Cardiac septum (tissue), 1 donor: ENCODE measurements at regions of chr3 and their contacts with region 1.

Region 1: GRCh38 chr3:197511130-197511529 is 44.6 kb downstream of the BDH1 start:
- DNase-seq: no peak

Region 2: DNA sequence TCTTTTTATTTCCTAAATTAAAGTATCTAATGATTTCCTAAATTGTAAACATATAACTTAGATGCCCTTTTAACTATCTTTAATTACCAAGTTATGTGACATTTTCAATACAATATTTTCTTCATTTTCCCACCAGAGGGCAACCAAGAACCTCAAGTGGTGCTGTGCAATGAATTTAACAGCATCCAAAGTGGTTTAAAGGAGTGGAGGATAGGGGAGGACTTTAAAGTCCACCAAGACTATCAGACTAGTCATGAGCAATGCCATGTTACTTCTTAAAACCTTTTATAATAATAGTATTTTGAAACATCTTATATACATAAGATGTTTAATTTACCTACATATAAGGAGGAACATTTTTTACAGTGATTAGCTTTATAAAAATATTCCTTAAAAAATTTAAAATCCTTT is 287.1 kb before region 1 on chr3:
- intact Hi-C with region 1: loop called (anchors 5 kb)
- DNase-seq: no peak

Region 3: DNA sequence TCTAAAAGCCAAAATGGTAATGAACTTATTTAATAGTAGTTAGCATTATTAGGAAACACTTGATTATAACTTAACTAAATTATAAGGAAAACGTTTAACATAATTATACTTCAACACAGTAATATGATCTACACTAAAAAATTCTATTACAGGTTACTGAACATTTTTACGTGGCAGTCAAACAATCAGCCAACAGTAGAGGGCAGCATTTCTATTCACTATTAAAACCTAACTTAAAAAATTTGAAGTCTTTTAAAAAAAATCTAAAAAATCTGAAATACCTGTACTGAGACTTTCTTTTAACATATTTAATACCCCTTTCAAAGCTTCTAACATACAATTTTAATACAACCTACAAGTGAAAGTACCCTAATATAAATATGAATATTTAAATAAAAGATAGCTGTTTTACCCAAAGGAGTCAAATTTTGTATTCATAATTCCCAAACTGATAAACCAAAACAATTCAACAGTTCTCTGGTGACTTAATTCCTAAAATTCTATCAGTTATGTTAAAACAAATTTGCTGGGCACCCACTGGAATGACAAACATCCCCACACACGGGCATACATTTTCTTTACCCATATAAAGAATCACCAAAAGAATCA is 254.2 kb before region 1 on chr3:
- intact Hi-C with region 1: loop called (anchors 2 kb)
- DNase-seq: no peak

Region 4: DNA sequence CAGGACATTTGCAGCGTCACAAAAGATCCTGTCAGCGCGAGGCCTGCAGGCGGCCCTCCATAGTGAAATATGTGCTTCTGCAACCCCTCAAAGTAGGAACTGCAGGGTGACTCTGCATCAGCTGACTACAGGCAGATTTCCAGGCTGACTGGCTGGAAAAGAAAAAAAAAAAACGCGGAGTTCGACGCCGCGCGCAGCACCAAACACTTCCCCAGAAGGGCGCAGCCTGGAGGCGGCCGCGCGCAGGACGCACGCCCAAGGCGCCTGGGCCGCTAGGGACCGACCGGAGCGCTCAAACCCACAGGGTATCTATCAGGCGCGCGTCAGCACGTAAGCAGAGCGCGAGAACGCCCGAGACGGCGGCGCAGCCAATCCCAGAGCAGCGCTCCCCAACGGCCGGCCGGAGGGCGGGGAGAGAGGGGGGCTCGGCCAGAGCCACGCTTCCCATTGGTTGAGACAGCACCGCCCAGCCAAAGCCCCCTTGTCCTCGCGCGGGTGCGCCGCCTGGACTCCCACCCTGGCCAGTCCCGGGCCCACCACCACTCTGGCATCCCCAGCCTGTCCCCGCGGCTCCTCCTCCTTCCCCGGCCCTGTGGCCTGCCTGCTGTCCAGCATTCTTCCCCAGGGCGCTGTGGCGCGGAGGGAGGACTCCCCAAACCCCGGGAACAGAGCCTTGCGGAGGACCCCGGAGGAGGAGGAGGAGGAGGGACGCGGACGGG is 43.6 kb after region 1 on chr3:
- intact Hi-C with region 1: no loop called
- DNase-seq: peak; percentile 98

Region 5: GRCh38 chr3:197590313-197590962 is 79.3 kb after region 1 on chr3:
- intact Hi-C with region 1: no loop called
- DNase-seq: no peak